HAP-1 (cell line): ENCODE measurements at regions of chr17 and their contacts with region 1.

Region 1: GRCh38 chr17:9817086-9817485 is 4.8 kb downstream of the GSG1L2 start:
- DNase-seq: no peak
- H3K4me3 ChIP-seq: no peak overlapping the region
- H3K4me1 ChIP-seq: no peaks in the 10 kb centered on the region
- H3K27me3 ChIP-seq: no peaks in the 10 kb centered on the region

Region 2: GRCh38 chr17:8470447-8471047 is 1346.5 kb before region 1 on chr17:
- in situ Hi-C with region 1: no loop called
- DNase-seq: no peak
- H3K4me3 ChIP-seq: no peak overlapping the region
- H3K4me1 ChIP-seq: no peaks in the 10 kb centered on the region
- H3K27me3 ChIP-seq: no peaks in the 10 kb centered on the region

Region 3: GRCh38 chr17:9865586-9865985 is 48.5 kb after region 1 on chr17:
- in situ Hi-C with region 1: loop called (anchors 10 kb)
- DNase-seq: no peak
- H3K4me3 ChIP-seq: no peak overlapping the region
- H3K4me1 ChIP-seq: no peaks in the 10 kb centered on the region
- H3K27me3 ChIP-seq: no peaks in the 10 kb centered on the region